ENCODE measurements at regions of chr14 and their contacts with region 1.

Region 1: GRCh38 chr14:28756884-28757570 is 9.6 kb upstream of the FOXG1 start:
- DNase-seq: peak; percentile 34
- H3K4me3 ChIP-seq: no peak overlapping the region
- H3K27ac ChIP-seq: no peak overlapping the region
- H3K4me1 ChIP-seq: peaks cover 3% of the 10 kb centered on the region
- H3K27me3 ChIP-seq: peaks cover 66 to 84% of the 10 kb centered on the region in 2 experiments
- CTCF ChIP-seq: peak; percentile 71 to 74
- POLR2A ChIP-seq: no peak

Region 2: GRCh38 chr14:28773861-28774691 is 17.0 kb after region 1 on chr14:
- CTCF ChIA-PET with region 1: interaction called, 23 read pairs
- POLR2A ChIA-PET with region 1: no interaction called
- dilution Hi-C with region 1: no loop called
- intact Hi-C with region 1: no loop called
- DNase-seq: no peak
- H3K4me3 ChIP-seq: no peak overlapping the region
- H3K27ac ChIP-seq: no peak overlapping the region
- H3K4me1 ChIP-seq: no peaks in the 10 kb centered on the region
- H3K27me3 ChIP-seq: peaks cover 49 to 100% of the 10 kb centered on the region in 2 experiments
- CTCF ChIP-seq: peak; percentile 23 to 36
- POLR2A ChIP-seq: no peak

Region 3: DNA sequence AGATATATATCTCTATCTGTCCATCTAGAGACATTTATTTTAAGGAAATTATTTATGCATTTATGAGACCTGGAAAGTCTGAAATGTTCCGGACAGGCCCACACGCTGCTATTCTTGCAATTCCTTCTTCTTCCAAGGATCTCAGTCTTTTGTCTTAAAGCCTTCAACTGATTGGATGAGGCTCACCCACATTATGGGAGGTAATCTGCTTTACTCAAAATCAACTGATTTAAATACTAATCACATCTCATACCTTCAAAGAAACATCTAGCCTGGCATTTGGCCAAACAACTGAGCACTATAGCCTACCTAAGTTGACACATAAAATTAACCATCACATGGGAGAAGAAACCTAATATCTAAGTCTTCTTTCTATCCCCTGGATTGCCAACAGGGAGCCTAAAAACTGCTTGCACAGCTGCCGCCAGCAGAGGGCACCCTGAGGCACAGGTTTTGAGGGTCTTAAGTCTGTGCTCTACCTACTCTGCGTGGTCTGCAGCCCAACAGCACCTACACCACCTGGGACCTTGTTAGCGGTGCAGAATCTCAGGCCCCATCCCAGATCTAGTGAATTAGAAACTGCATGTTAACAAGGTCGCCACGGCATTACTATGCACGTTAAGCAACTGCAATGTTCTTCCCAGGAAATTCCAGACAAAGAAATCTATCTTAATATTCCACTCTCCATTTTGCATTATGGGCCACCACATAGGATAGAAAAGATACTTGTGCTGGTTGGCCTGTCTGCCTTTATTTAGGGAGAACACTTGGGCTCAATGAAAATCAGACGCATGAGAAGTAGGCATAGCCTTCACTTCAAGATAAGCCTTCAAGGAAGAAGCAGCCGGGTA is 259.2 kb after region 1 on chr14:
- CTCF ChIA-PET with region 1: no interaction called
- POLR2A ChIA-PET with region 1: no interaction called
- dilution Hi-C with region 1: no loop called
- intact Hi-C with region 1: loop called (anchors 5 kb)
- DNase-seq: peak; percentile 60
- H3K4me3 ChIP-seq: no peak overlapping the region
- H3K27ac ChIP-seq: no peak overlapping the region
- H3K4me1 ChIP-seq: no peaks in the 10 kb centered on the region
- H3K27me3 ChIP-seq: peaks cover 0 to 4% of the 10 kb centered on the region in 2 experiments
- CTCF ChIP-seq: peak; percentile 69 to 75
- POLR2A ChIP-seq: no peak

Region 4: GRCh38 chr14:29236848-29237247 is 479.8 kb after region 1 on chr14:
- CTCF ChIA-PET with region 1: no interaction called
- POLR2A ChIA-PET with region 1: no interaction called
- dilution Hi-C with region 1: no loop called
- intact Hi-C with region 1: loop called (anchors 5 kb)
- DNase-seq: peak; percentile 80
- H3K4me3 ChIP-seq: peak overlapping the region in 1 of 3 experiments; percentile 16
- H3K27ac ChIP-seq: peak overlapping the region; percentile 79
- H3K4me1 ChIP-seq: peaks cover 62% of the 10 kb centered on the region
- H3K27me3 ChIP-seq: no peaks in the 10 kb centered on the region
- CTCF ChIP-seq: no peak
- POLR2A ChIP-seq: no peak

Region 5: DNA sequence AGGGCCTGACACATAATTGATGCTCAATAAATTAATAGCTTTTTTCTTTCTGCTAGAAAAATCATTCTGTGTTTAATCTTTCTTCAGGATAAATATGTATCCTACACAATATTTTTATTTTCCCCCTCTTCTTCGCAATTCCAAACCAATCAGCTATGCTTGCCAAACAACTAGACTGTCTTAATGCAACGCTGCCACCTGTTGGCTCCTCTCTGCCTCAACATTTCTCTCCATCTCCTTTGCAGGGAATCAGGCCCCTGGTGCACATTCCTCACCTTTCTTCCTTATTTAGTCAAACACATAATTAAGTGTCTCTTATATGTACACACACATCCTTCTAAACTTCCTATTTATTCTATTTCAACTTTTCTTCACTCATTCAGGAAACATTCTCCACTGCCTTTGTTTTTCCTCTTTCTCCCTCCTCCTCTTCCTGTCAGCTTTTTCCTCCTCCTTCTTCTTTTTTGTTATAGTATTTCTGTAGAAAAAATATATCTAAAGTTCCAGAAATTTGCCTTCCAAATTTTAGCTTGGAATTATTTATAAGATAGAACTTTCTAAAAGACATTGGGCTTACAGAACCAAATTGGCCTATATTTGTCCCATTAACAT is 764.6 kb after region 1 on chr14:
- CTCF ChIA-PET with region 1: interaction called, 10 read pairs
- POLR2A ChIA-PET with region 1: no interaction called
- dilution Hi-C with region 1: no loop called
- intact Hi-C with region 1: loop called (anchors 1 kb)
- DNase-seq: peak; percentile 6
- H3K4me3 ChIP-seq: no peak overlapping the region
- H3K27ac ChIP-seq: no peak overlapping the region
- H3K4me1 ChIP-seq: no peaks in the 10 kb centered on the region
- H3K27me3 ChIP-seq: no peaks in the 10 kb centered on the region
- CTCF ChIP-seq: peak; percentile 28 to 42
- POLR2A ChIP-seq: no peak

Region 6: DNA sequence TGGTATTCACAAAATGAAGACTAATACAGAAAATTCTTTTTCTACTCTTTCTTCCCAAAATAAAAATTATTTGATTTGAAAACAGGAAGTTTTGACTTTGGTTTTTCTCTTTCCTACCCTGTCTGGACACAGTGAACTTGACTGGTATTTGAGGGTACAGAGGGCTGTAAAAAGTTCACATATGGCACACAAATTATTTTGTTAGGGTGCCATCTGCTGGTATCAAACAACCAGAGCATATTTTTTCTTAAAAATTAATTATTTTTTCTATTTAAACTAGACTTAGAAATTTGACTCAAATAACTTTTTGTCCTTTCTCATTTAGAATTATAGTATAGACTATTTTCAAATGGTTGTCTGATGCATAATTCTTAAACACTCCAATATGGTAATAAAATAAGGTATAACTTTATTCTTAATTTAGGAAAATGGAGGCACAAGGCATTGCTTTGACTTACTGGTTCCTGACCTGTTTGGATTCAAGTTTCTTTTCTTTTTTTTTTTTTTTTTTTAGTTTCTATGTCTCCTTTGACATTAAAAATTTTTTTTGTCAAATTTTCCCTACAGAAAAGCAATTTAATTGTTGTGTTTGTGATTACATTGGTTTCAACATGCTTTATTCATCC is 780.0 kb after region 1 on chr14:
- CTCF ChIA-PET with region 1: interaction called, 22 read pairs
- POLR2A ChIA-PET with region 1: no interaction called
- dilution Hi-C with region 1: no loop called
- intact Hi-C with region 1: loop called (anchors 1 kb)
- DNase-seq: peak; percentile 33
- H3K4me3 ChIP-seq: no peak overlapping the region
- H3K27ac ChIP-seq: no peak overlapping the region
- H3K4me1 ChIP-seq: no peaks in the 10 kb centered on the region
- H3K27me3 ChIP-seq: peaks cover 4 to 23% of the 10 kb centered on the region in 2 experiments
- CTCF ChIP-seq: peak; percentile 4 to 8
- POLR2A ChIP-seq: no peak

Region 7: GRCh38 chr14:30005114-30005808 is 1248.2 kb after region 1 on chr14:
- CTCF ChIA-PET with region 1: no interaction called
- POLR2A ChIA-PET with region 1: no interaction called
- dilution Hi-C with region 1: no loop called
- intact Hi-C with region 1: loop called (anchors 2 kb)
- DNase-seq: peak; percentile 53
- H3K4me3 ChIP-seq: no peak overlapping the region
- H3K27ac ChIP-seq: no peak overlapping the region
- H3K4me1 ChIP-seq: no peaks in the 10 kb centered on the region
- H3K27me3 ChIP-seq: peaks cover 0 to 6% of the 10 kb centered on the region in 2 experiments
- CTCF ChIP-seq: peak; percentile 29 to 56
- POLR2A ChIP-seq: no peak